ENCODE measurements at regions of chr17 and their contacts with region 1.

Region 1: DNA sequence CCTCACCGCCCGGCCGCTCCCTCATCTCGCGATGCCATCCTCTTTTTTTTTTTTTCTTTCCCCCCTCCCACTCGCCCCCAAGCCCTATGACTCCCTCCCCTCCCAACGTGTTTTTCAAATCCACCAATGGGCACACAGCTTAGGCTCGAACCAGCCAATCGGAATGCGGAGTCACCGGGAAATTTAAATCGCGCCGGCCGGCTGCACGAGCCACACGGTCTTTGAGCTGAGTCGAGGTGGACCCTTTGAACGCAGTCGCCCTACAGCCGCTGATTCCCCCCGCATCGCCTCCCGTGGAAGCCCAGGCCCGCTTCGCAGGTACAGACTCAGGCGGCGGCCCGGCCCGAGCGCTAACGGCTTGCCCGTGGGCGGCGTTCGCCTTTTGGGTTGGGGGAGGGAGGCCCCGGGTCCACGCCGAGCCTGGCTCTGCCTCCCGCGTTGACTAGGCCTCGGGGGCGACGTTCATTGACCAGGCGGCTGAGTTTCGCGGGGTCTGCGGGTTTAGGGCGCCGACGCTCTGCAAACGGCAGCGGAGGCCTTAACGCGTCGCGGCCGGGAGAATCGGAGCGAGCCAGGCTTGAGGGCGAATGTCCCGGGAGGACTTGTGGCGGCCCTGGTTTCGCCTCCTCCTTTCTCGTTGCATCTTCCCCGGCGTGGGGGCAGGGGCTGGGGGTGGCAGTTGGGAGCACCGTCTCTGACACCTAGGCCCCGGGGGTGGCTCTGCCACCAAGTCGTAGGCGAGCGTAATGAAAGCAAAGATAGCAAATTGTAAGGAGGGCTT is at the start of gene KPNA2:
- DNase-seq: peak; percentile 98
- H3K4me3 Mint-ChIP-seq: peak within 1 kb of the TSS; percentile 86
- H3K27ac Mint-ChIP-seq: peak within 1 kb of the TSS; percentile 81
- H3K4me1 Mint-ChIP-seq: no peaks in the 10 kb centered on the region
- H3K27me3 Mint-ChIP-seq: no peaks in the 10 kb centered on the region
- CTCF ChIP-seq: no peak
- total RNA-seq, gene KPNA2: 120 and 132 TPM in 2 replicates

Region 2: GRCh38 chr17:67912656-67913055 is 123.1 kb before region 1 on chr17:
- CTCF ChIA-PET with region 1: no interaction called
- POLR2A ChIA-PET with region 1: no interaction called
- intact Hi-C with region 1: no loop called
- DNase-seq: no peak
- H3K4me3 Mint-ChIP-seq: no peak overlapping the region
- H3K27ac Mint-ChIP-seq: no peak overlapping the region
- H3K4me1 Mint-ChIP-seq: no peaks in the 10 kb centered on the region
- H3K27me3 Mint-ChIP-seq: no peaks in the 10 kb centered on the region
- CTCF ChIP-seq: no peak

Region 3: DNA sequence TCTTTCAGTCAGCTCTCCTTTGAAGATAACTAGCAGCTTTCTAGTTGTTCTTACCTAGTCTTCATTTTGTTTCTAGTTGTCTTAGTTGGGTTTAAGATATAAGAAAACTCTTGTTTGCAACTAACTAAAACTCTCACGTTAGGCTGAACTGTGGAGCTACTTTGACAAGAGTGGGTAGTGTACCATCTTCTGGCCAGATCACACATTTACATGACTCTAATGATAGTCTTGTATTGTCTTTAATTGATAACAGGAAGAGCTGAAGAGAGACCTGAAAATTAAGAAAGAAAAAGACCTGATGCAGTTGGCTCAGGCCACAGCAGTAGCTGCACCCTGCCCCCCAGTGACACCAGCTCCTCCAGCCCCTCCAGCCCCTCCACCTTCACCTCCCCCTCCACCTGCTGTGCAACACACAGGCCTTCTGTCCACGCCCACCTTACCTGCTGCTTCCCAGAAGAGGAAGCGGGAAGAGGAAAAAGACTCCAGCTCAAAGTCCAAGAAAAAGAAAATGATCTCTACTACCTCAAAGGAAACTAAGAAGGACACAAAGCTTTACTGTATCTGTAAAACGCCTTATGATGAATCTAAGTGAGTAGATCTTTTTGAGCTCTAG is 76.3 kb before region 1 on chr17:
- CTCF ChIA-PET with region 1: no interaction called
- POLR2A ChIA-PET with region 1: no interaction called
- intact Hi-C with region 1: no loop called
- DNase-seq: no peak
- H3K4me3 Mint-ChIP-seq: no peak overlapping the region
- H3K27ac Mint-ChIP-seq: peak overlapping the region; percentile 27
- H3K4me1 Mint-ChIP-seq: no peaks in the 10 kb centered on the region
- H3K27me3 Mint-ChIP-seq: no peaks in the 10 kb centered on the region
- CTCF ChIP-seq: no peak

Region 4: DNA sequence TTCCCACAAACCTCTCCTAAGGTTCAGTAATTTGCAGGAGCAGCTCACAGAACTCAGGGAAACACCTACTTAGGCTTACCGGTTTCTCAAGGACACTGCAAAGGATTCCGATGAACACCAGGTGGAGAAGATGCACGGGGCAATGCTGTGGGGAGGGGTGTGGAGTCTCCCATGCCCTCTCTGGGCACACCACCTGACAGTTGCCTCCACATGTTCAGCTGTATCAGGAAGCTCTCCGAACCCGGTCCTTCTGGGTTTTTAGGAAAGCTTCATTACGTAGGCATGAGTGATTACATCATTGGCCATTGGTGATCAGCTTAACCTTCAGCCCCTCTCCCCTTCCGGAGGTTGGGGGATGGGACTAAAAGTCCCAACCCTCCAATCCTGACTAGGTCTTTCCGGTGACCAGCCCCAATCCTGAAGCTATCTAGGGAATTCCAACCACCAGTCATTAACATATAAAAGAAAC is 61.1 kb before region 1 on chr17:
- CTCF ChIA-PET with region 1: no interaction called
- POLR2A ChIA-PET with region 1: no interaction called
- intact Hi-C with region 1: no loop called
- DNase-seq: no peak
- H3K4me3 Mint-ChIP-seq: no peak overlapping the region
- H3K27ac Mint-ChIP-seq: no peak overlapping the region
- H3K4me1 Mint-ChIP-seq: peaks cover 6% of the 10 kb centered on the region
- H3K27me3 Mint-ChIP-seq: no peaks in the 10 kb centered on the region
- CTCF ChIP-seq: no peak

Region 5: DNA sequence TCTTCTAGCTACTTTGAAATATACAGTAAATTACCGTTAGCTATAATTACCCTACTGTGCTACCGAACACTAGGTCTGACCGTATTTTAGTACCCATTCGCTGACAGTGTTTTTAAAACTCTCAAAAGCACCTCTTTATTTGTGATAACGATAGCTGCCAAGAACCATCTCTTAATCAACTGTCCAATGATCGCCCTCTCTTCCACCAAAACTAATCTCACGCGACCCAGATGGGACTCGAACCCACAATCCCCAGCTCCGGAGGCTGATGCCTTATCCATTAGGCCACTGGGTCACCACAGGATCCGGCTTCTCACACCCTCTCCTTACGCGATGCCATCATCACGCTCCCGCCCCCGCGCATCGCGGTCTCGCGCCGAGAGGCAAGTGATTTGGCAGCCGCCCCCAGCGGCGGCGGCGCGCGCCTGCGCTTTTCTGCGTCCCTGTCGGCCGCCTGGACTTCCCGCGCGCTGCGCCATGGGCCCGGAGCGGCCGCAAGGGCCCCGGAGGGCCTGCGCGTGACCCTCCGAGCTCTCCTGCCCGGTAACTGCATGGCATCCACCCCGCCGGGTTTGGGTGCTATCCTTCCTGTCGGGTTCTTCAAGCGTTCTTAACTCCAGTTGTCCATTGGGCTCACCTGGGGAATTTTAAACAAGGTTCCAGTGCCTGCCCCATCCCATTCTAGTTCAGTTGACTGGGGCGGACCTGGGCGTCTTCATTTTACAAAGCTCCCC is 15.9 kb before region 1 on chr17:
- CTCF ChIA-PET with region 1: interaction called, 4 read pairs
- POLR2A ChIA-PET with region 1: interaction called, 24 read pairs
- intact Hi-C with region 1: loop called (anchors 1 kb)
- DNase-seq: peak; percentile 95
- H3K4me3 Mint-ChIP-seq: peak overlapping the region; percentile 86
- H3K27ac Mint-ChIP-seq: peak overlapping the region; percentile 84
- H3K4me1 Mint-ChIP-seq: peaks cover 6% of the 10 kb centered on the region
- H3K27me3 Mint-ChIP-seq: no peaks in the 10 kb centered on the region
- CTCF ChIP-seq: no peak

Region 6: GRCh38 chr17:68048996-68049395 is 13.3 kb after region 1 on chr17:
- CTCF ChIA-PET with region 1: no interaction called
- POLR2A ChIA-PET with region 1: interaction called, 11 read pairs
- intact Hi-C with region 1: no loop called
- DNase-seq: no peak
- H3K4me3 Mint-ChIP-seq: no peak overlapping the region
- H3K27ac Mint-ChIP-seq: no peak overlapping the region
- H3K4me1 Mint-ChIP-seq: peaks cover 6% of the 10 kb centered on the region
- H3K27me3 Mint-ChIP-seq: no peaks in the 10 kb centered on the region
- CTCF ChIP-seq: no peak

Region 7: DNA sequence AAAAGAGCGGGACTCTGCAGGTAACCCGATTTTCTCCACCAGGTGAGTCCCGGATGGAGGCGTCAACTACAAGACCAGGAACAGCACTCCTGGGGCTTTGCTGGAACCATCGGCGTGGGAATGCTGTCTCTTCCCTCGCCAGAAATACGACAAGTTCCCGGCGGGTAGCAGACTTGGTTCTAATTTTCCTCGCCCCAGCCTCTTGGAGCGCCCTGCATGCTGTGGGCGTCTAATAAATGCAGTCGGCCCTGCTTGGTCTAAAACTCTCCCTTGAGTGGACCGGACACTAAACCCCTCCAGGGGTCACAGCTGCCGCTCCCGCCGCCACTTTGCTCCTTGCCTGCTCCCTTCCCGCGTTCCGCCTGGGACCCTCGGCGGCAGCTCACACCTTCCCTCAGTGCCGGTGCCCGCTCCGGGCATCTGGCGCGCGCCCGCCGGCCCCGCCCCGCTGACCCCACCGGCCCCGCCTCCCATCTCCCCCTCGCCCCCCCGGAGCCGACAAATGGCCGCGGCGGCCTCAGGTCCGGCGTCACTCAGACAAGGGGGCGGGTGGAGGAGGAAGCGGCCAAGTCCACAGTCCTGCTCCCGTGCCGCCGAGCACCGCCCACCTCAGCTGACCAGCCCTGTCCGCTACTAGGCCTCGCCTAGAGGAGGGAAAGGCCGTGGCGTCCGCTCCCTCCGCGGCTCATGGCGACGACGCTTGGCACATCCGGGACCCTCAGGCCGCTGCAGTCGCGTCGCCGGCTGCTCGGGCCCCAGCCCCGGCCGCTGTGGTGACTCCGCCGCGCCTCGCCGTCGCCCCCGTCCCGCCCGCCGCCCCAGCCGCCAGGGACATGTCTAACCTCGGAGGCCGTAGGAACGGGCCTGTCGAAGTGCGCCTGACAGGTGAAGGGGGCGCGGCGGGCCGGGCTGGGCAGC is 65.6 kb after region 1 on chr17:
- CTCF ChIA-PET with region 1: no interaction called
- POLR2A ChIA-PET with region 1: interaction called, 20 read pairs
- intact Hi-C with region 1: loop called (anchors 10 kb)
- DNase-seq: peak; percentile 93
- H3K4me3 Mint-ChIP-seq: peak overlapping the region; percentile 96
- H3K27ac Mint-ChIP-seq: peak overlapping the region; percentile 94
- H3K4me1 Mint-ChIP-seq: peaks cover 10% of the 10 kb centered on the region
- H3K27me3 Mint-ChIP-seq: no peaks in the 10 kb centered on the region
- CTCF ChIP-seq: no peak